A549 (cell line): ENCODE measurements at regions of chr11 and their contacts with region 1.

Region 1: GRCh38 chr11:8263769-8264410 is at the start of gene LMO1:
- DNase-seq: peak; percentile 74 to 98
- ATAC-seq: peak; percentile 60 to 86
- H3K4me3 ChIP-seq: peak within 1 kb of the TSS; percentile 66
- H3K27ac ChIP-seq: peak within 1 kb of the TSS; percentile 32 to 64; a peak in 4 of 6 replicates
- H3K4me1 ChIP-seq: peaks cover 4% of the 10 kb centered on the region; the same call in 1 of the 3 replicates
- CTCF ChIP-seq: peak; percentile 90
- EP300 ChIP-seq: no peak
- POLR2A ChIP-seq: no peak
- RAD21 ChIP-seq: peak; percentile 69 to 79
- polyA plus RNA-seq, gene LMO1: 0.18 and 1.3 TPM in 2 replicates

Region 2: DNA sequence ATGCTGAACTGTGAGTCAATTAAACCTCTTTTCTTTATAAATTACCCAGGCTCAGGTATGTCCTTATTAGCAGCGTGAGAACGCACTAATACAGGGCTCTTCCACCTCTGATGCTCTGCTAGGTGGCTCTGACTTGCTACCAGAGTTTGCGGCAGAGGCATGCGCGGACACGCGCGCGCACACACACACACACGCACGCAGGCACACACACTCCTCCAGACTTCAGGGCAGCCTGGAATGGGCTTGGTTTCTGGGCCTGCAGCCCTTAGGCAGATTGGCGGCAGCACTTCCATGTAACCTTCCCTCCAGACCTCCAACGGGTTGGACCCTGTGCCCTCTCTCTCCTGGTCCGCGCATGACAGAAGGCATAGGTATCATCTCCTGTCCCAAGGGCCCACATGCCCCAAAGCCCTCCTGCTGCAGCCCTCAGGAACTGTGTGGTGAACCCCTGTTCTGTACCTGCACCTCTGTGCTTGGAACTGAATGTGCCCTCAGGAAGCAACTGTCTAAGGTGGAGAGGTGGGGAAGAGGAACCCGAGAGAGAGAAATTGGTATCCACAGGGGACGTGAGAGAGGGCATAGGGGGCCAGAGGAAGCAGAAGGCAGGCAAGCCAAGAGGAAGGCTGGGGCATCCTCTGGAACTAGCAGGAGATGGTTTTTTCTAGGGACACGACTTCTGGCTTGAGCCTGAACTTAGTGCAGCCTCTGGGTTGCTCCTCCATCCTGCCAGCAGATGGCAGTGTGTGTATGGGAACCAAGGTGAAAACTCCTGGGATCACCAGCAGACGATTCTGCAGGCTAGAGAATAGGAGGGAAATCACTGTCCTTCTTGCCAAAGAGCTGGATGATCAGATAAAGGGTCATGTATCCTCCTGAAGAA is 71.6 kb before region 1 on chr11:
- CTCF ChIA-PET with region 1: interaction called, 36 read pairs
- POLR2A ChIA-PET with region 1: no interaction called
- DNase-seq: peak; percentile 69 to 78
- ATAC-seq: peak; percentile 90 to 98
- H3K4me3 ChIP-seq: no peak overlapping the region
- H3K27ac ChIP-seq: no peak overlapping the region
- H3K4me1 ChIP-seq: no peaks in the 10 kb centered on the region
- CTCF ChIP-seq: peak; percentile 79
- EP300 ChIP-seq: no peak
- POLR2A ChIP-seq: no peak
- RAD21 ChIP-seq: peak; percentile 74 to 82

Region 3: DNA sequence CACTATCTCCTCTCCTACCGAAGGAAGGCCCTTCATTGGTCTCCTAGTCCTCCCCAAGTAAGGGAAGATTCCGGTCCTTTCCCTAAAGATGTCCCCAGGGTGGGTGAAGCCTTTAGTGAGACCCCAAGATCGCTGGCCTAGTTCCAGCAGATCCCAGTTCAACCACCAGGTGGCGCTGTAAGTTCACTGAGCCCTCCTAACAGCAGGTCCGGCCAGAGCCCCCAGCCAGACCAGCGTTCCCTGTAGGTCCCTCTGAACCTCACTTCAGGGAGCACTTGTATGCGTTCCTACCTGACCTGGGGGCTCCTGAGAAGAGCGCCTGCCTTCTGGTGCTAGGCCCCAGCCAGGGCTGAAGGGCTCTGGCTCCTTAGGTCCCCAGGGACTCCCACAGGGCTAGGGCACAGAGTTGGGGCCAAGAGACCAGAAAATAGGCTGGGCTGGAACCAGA is 38.3 kb before region 1 on chr11:
- CTCF ChIA-PET with region 1: interaction called, 424 read pairs
- POLR2A ChIA-PET with region 1: no interaction called
- DNase-seq: peak; percentile 58 to 88
- ATAC-seq: peak; percentile 32 to 85; a peak in 4 of 6 replicates
- H3K4me3 ChIP-seq: no peak overlapping the region
- H3K27ac ChIP-seq: 0 out of 6 replicates have a peak overlapping the region, but pooled peaks of 1 of the 2 experiments have one; percentile 24
- H3K4me1 ChIP-seq: peaks cover 26% of the 10 kb centered on the region
- CTCF ChIP-seq: peak; percentile 91
- EP300 ChIP-seq: no peak
- POLR2A ChIP-seq: no peak
- RAD21 ChIP-seq: peak; percentile 94 to 95

Region 4: GRCh38 chr11:8247312-8247711 is 16.6 kb before region 1 on chr11:
- CTCF ChIA-PET with region 1: interaction called, 184 read pairs
- POLR2A ChIA-PET with region 1: no interaction called
- DNase-seq: no peak
- ATAC-seq: peak; percentile 73 to 84
- H3K4me3 ChIP-seq: no peak overlapping the region
- H3K27ac ChIP-seq: no peak overlapping the region
- H3K4me1 ChIP-seq: no peaks in the 10 kb centered on the region
- CTCF ChIP-seq: peak; percentile 52
- EP300 ChIP-seq: no peak
- POLR2A ChIP-seq: no peak
- RAD21 ChIP-seq: peak; percentile 37 to 58; a peak in 4 of 5 replicates

Region 5: GRCh38 chr11:8318336-8318935 is 54.5 kb after region 1 on chr11:
- CTCF ChIA-PET with region 1: interaction called, 16 read pairs
- POLR2A ChIA-PET with region 1: no interaction called
- DNase-seq: no peak
- ATAC-seq: peak in 1 of 2 experiments; percentile 73; a peak in 3 of 6 replicates
- H3K4me3 ChIP-seq: no peak overlapping the region
- H3K27ac ChIP-seq: no peak overlapping the region
- H3K4me1 ChIP-seq: no peaks in the 10 kb centered on the region
- CTCF ChIP-seq: 0 out of 3 replicates have a peak, but pooled peaks have one; percentile 6
- EP300 ChIP-seq: no peak
- POLR2A ChIP-seq: no peak
- RAD21 ChIP-seq: peak; percentile 20 to 21; a peak in 2 of 5 replicates